ENCODE measurements at regions of chr3 and their contacts with region 1.

Region 1: DNA sequence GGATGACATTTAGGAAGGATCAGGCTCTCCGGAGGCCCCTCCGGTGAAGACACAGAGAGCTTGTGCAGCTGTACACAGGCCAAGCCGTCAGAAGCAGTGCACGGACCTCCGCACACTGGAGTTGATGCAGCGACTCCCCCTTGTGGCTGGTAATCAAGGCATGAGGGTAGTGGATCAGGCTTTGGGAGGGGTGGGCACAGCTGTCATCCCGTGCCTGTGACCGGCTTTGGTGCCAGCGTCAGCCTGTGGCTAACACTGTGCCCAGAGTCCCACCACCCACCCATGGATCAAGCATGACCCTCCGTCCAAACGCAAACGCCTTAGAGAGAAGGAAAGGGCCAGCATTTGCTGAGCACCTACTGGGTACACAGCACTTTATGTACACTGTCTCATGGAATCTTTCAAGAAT is 8.2 kb upstream of the GRIP2 start:
- DNase-seq: no peak
- ATAC-seq: peak; percentile 89
- H3K4me3 ChIP-seq: no peak overlapping the region
- H3K27ac ChIP-seq: no peak overlapping the region
- H3K4me1 ChIP-seq: no peaks in the 10 kb centered on the region
- H3K27me3 ChIP-seq: peaks cover 2 to 3% of the 10 kb centered on the region in 2 experiments; a peak in 2 of 4 replicates
- CTCF ChIP-seq: peak; percentile 57 to 69 (median 60); a peak in 5 of 6 replicates
- EP300 ChIP-seq: no peak
- POLR2A ChIP-seq: no peak
- RAD21 ChIP-seq: peak; percentile 66

Region 2: GRCh38 chr3:14261229-14261628 is 287.1 kb before region 1 on chr3:
- CTCF ChIA-PET with region 1: interaction called, 3 read pairs
- POLR2A ChIA-PET with region 1: no interaction called
- RAD21 ChIA-PET with region 1: interaction called, 3 read pairs
- SMC1A ChIA-PET with region 1: no interaction called
- in situ Hi-C with region 1: no loop called
- intact Hi-C with region 1: loop called (anchors 1 kb)
- DNase-seq: peak; percentile 16
- ATAC-seq: peak; percentile 94
- H3K4me3 ChIP-seq: no peak overlapping the region
- H3K27ac ChIP-seq: no peak overlapping the region
- H3K4me1 ChIP-seq: no peaks in the 10 kb centered on the region
- H3K27me3 ChIP-seq: peaks cover 0 to 4% of the 10 kb centered on the region in 2 experiments; a peak in 2 of 4 replicates
- CTCF ChIP-seq: peak; percentile 89 to 95 (median 94); a peak in 5 of 6 replicates
- EP300 ChIP-seq: no peak
- POLR2A ChIP-seq: no peak
- RAD21 ChIP-seq: peak; percentile 98

Region 3: DNA sequence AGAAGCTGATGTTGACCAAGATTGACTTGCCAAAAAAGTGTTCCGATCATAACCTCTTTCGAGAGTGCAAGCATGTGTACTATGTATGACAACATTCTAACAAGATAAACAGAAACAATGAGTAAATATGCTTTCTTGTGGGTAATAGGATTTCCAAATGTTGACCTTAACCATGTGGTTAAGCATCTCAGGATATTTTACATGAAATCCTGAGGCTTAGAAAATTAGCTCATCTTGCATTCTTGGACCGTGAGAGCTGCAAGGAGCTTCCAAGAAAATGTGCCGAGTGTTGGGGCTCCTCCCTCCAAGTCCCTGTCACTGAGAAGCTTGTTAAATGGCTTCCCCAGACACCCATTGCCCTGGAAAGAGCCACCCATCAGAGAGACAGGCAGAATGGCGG is 176.7 kb after region 1 on chr3:
- CTCF ChIA-PET with region 1: no interaction called
- POLR2A ChIA-PET with region 1: no interaction called
- RAD21 ChIA-PET with region 1: no interaction called
- SMC1A ChIA-PET with region 1: no interaction called
- in situ Hi-C with region 1: no loop called
- intact Hi-C with region 1: no loop called
- DNase-seq: no peak
- ATAC-seq: no peak
- H3K4me3 ChIP-seq: no peak overlapping the region
- H3K27ac ChIP-seq: no peak overlapping the region
- H3K4me1 ChIP-seq: peaks cover 13% of the 10 kb centered on the region
- H3K27me3 ChIP-seq: no peaks in the 10 kb centered on the region
- CTCF ChIP-seq: no peak
- EP300 ChIP-seq: no peak
- POLR2A ChIP-seq: no peak
- RAD21 ChIP-seq: no peak